Heart right ventricle (tissue), 16 donors: ENCODE measurements at regions of chr11 and their contacts with region 1.

Region 1: GRCh38 chr11:78416305-78417178 is 1.1 kb downstream of the GAB2 start:
- DNase-seq: peak; percentile 87 to 88
- ATAC-seq: peak; percentile 53 to 79 (median 76)
- H3K4me3 ChIP-seq: peak overlapping the region; percentile 76 to 96 (median 87)
- H3K27ac ChIP-seq: peak overlapping the region; percentile 92 to 99 (median 97)
- H3K4me1 ChIP-seq: peaks cover 3 to 70% (median 41%) of the 10 kb centered on the region in 9 donors
- H3K27me3 ChIP-seq: no peaks in the 10 kb centered on the region
- CTCF ChIP-seq: peak; percentile 25 to 72 (median 58)

Region 2: GRCh38 chr11:78139422-78140391 is 276.8 kb before region 1 on chr11 and contains the start of gene ALG8:
- intact Hi-C with region 1: loop called in 2 of 10 experiments (anchors 10 kb)
- DNase-seq: peak; percentile 96 to 97
- ATAC-seq: peak; percentile 98 to 100 (median 99)
- H3K4me3 ChIP-seq: peak within 1 kb of the TSS; percentile 38 to 92 (median 72)
- H3K27ac ChIP-seq: peak within 1 kb of the TSS in 9 of 10 donors; percentile 66 to 87 (median 71)
- H3K4me1 ChIP-seq: peaks cover 0 to 39% (median 18%) of the 10 kb centered on the region in 9 donors
- H3K27me3 ChIP-seq: no peaks in the 10 kb centered on the region
- CTCF ChIP-seq: no peak
- total RNA-seq, gene ALG8: 9.6 to 19.5 (median 15.5) TPM

Region 3: DNA sequence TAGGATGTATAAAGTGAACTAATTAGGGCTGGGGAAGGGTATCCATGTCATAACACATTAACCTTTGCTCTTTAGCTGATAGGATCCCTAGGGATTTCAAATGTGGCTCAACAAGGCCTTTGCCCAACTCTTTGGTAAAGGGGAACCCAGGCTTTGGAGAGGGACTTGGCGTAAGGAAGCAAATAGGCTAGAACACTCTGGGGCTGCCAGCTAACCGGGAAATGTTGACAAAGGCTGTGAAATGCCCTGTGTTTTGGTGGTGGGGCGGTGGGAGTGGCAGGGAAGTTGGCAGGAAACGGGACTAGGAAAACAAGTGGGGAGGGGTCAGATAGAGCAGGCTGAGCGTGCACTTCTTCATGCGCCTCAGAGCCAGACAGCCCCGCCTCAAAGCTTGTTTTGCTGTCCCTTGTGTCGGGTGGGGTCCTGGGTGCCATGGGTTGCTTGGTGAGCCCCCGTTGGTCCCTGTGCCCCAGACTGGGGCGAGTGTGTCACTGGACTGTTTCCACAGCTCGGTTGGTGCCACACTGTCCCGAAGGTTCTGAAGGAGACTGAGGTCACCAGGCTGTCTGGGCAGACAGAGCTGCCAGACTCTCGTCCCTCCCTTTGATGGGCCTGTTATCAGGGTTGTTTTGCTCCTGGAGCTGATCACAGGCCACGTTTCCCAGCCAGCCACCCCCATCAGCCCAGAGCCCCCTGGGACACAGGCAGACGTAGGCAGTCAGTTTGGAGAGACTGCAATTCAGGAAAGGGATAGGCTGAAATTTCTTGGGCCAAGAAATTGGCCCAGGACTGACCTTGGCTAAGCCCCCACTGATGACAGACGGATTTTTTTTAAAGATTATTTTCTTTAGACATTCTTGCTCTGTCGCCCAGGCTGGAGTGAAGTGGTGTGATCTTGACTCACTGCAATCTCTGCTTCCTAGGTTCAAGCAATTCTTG is 247.7 kb before region 1 on chr11:
- intact Hi-C with region 1: loop called in 2 of 10 experiments (anchors 10 kb)
- DNase-seq: peak; percentile 87 to 90
- ATAC-seq: peak; percentile 91 to 95 (median 94)
- H3K4me3 ChIP-seq: no peak overlapping the region
- H3K27ac ChIP-seq: peak overlapping the region; percentile 70 to 92 (median 86)
- H3K4me1 ChIP-seq: peaks cover 14 to 45% (median 32%) of the 10 kb centered on the region in 9 donors
- H3K27me3 ChIP-seq: no peaks in the 10 kb centered on the region
- CTCF ChIP-seq: no peak

Region 4: GRCh38 chr11:78310500-78310909 is 106.0 kb before region 1 on chr11:
- intact Hi-C with region 1: loop called in 6 of 10 experiments (anchors 5 to 10 kb)
- DNase-seq: peak; percentile 73 to 77
- ATAC-seq: peak; percentile 85 to 95 (median 88)
- H3K4me3 ChIP-seq: peak overlapping the region in 4 of 10 donors; percentile 23 to 30 (median 26)
- H3K27ac ChIP-seq: peak overlapping the region in 9 of 10 donors; percentile 6 to 80 (median 70)
- H3K4me1 ChIP-seq: peaks cover 20 to 69% (median 61%) of the 10 kb centered on the region in 9 donors
- H3K27me3 ChIP-seq: no peaks in the 10 kb centered on the region
- CTCF ChIP-seq: no peak

Region 5: DNA sequence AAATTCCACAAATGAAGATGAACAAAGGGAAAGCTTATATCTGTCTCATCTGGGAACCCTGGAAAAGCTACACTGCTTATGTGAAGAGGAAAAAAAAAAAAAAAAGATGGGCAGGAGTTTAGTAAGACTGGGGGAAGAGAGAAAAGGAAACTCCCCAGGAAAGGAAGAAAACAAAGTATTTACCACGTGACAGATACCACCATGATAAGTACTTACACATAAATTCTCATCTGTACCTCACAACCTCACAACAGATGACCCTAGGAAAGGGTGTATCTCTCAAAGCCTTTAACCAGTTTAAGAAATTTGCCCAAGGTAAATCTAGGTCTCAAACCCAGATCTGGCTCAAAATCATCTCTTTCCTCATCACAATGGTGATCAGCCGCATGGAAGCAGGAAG is 76.0 kb before region 1 on chr11:
- intact Hi-C with region 1: no loop called
- DNase-seq: no peak
- ATAC-seq: no peak
- H3K4me3 ChIP-seq: no peak overlapping the region
- H3K27ac ChIP-seq: no peak overlapping the region
- H3K4me1 ChIP-seq: peaks cover 0 to 54% (median 13%) of the 10 kb centered on the region in 9 donors
- H3K27me3 ChIP-seq: no peaks in the 10 kb centered on the region
- CTCF ChIP-seq: no peak

Region 6: GRCh38 chr11:78350646-78351165 is 65.8 kb before region 1 on chr11:
- intact Hi-C with region 1: loop called in 4 of 10 experiments (anchors 5 kb)
- DNase-seq: peak in 1 of 2 donors; percentile 58
- ATAC-seq: peak; percentile 73 to 84 (median 80)
- H3K4me3 ChIP-seq: peak overlapping the region in 7 of 10 donors; percentile 11 to 40 (median 23)
- H3K27ac ChIP-seq: peak overlapping the region in 9 of 10 donors; percentile 63 to 91 (median 81)
- H3K4me1 ChIP-seq: peaks cover 12 to 100% (median 71%) of the 10 kb centered on the region in 9 donors
- H3K27me3 ChIP-seq: no peaks in the 10 kb centered on the region
- CTCF ChIP-seq: peak in 2 of 9 donors; percentile 14 to 40

Region 7: DNA sequence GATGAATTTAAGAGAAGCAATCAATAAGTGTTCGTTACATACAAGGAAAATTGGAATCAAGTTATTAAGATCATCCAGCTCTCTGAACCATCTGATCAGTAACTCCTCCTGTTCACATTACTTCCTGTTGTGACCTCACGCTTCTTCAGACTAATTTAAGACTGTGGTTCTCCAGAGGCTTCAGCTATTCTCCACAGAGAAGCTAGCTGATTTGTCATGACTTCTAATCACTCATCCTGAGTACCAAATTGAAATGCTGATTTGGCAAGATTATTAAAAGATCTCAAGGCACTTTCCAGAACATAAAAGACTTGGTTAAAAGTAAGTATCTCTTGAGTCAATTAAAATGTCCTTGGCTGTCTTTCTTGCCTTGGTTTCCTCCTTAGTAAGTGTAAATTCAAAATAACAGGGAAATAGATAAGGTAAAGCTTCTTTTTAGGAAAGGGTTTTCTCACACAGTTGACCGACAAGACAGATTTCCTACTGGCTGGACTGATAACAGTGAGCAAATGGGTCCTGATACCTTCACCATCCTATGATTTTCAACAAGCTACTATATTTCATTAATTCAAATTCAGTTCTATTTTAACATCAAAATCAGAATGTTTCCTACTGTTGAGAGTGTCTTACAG is 37.4 kb before region 1 on chr11:
- intact Hi-C with region 1: loop called in 1 of 10 experiments (anchors 5 kb)
- DNase-seq: no peak
- ATAC-seq: peak in 5 of 8 donors; percentile 48 to 55 (median 53)
- H3K4me3 ChIP-seq: no peak overlapping the region
- H3K27ac ChIP-seq: no peak overlapping the region
- H3K4me1 ChIP-seq: peaks cover 0 to 57% (median 35%) of the 10 kb centered on the region in 9 donors
- H3K27me3 ChIP-seq: no peaks in the 10 kb centered on the region
- CTCF ChIP-seq: no peak

Region 8: DNA sequence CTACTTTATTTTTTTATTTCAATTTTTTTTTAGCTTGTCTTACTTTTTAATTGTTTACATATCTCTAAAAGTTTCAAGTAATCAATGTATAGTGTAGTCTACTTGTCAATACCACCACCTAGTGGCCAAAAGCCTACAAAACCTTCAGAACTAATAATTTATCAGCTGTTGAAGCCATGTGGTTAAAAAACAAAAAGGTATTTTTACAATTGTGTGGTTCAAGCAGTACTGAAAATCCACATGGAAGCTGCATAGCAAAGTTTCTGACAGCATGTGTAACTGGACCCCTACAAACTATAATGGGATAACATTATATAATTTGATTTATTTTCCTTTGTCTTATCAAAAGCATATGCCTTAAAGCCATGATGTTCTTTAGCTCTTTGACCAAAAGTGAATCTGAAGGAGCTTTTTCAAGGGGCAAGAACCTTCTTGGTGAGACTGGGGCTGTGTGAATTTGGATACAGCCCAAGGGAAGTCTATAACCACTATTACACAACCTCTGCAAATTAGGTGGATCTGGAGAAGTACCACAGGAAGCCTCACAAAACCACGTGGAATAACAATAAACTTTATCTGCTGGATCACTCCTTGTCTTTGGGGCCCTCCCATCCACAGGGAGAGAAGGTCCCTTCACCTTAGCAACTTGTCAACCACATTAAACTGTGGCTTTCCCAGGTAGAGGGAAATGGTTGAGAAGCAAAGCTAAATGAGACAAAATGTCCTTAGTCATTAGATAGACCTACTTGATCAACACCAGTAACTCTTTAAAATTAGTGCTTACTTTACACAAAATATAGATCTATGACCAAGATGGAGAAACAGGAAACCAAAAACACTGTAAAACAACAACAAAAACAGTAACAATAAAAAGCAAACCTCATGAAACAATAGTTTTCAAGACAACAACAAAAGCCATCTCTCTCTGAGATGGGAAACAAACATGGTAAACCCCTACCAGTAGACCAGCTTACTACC is 148.2 kb after region 1 on chr11:
- intact Hi-C with region 1: loop called (anchors 2 to 10 kb)
- DNase-seq: peak in 1 of 2 donors; percentile 57
- ATAC-seq: peak in 6 of 8 donors; percentile 30 to 64 (median 54)
- H3K4me3 ChIP-seq: no peak overlapping the region
- H3K27ac ChIP-seq: peak overlapping the region in 1 of 10 donors; percentile 7
- H3K4me1 ChIP-seq: peaks cover 9 to 43% (median 31%) of the 10 kb centered on the region in 9 donors
- H3K27me3 ChIP-seq: no peaks in the 10 kb centered on the region
- CTCF ChIP-seq: peak; percentile 56 to 87 (median 80)